ENCODE measurements at regions of chr2 and their contacts with region 1.

Region 1: GRCh38 chr2:11583840-11584524 is 50.1 kb downstream of the GREB1 start:
- DNase-seq: peak; percentile 98
- ATAC-seq: peak; percentile 97
- H3K4me3 ChIP-seq: no peak overlapping the region
- H3K27ac ChIP-seq: no peak overlapping the region
- H3K4me1 ChIP-seq: peaks cover 2% of the 10 kb centered on the region; the same call in 1 of the 2 replicates
- H3K27me3 ChIP-seq: peaks cover 36% of the 10 kb centered on the region
- CTCF ChIP-seq: peak; percentile 99
- POLR2A ChIP-seq: no peak
- RAD21 ChIP-seq: peak; percentile 99

Region 2: DNA sequence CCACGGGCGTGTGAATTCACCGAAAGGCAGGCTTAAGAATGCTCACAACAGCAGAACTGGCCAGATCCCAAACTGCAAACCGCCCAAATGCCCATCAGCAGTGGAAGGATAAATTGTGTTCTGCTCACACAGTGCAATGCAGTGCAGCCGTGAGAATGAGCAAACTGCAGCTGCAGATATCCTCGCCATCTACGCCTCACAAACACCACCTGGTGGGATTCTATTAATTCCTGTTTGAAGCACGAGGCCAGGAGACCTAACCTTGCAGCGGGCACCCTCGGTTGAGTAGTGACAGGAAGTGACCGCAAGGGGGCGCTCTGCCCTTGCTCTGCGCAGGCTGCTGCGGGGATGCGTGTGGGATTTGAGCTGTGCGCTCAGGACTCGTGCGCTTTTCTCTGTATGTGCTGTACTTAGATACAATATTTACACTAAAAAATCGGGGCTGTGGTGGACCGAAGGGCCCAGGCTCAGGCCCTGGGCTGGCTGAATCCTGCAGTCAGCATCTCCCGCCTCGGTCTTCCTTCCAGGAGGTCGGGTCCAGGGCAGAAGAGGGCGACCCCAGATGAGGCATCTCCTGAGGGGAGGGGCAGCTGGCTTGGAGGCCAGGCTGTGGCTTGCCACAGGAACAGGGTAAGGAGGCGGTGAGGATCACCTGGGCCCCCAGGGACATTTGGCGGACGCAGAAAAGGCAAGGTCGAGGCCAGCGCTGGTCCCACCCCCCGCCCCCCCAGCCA is 751.6 kb before region 1 on chr2:
- CTCF ChIA-PET with region 1: interaction called, 4 read pairs
- POLR2A ChIA-PET with region 1: no interaction called
- dilution Hi-C with region 1: no loop called
- in situ Hi-C with region 1: loop called (anchors 10 kb)
- intact Hi-C with region 1: loop called (anchors 2 kb)
- DNase-seq: peak; percentile 77
- ATAC-seq: peak; percentile 94
- H3K4me3 ChIP-seq: no peak overlapping the region
- H3K27ac ChIP-seq: no peak overlapping the region
- H3K4me1 ChIP-seq: no peaks in the 10 kb centered on the region
- H3K27me3 ChIP-seq: peaks cover 34% of the 10 kb centered on the region
- CTCF ChIP-seq: peak; percentile 97
- POLR2A ChIP-seq: no peak
- RAD21 ChIP-seq: peak; percentile 98

Region 3: GRCh38 chr2:11129598-11130449 is 454.2 kb before region 1 on chr2:
- CTCF ChIA-PET with region 1: interaction called, 12 read pairs
- POLR2A ChIA-PET with region 1: no interaction called
- dilution Hi-C with region 1: no loop called
- in situ Hi-C with region 1: no loop called
- intact Hi-C with region 1: loop called (anchors 1 kb)
- DNase-seq: no peak
- ATAC-seq: no peak
- H3K4me3 ChIP-seq: no peak overlapping the region
- H3K27ac ChIP-seq: no peak overlapping the region
- H3K4me1 ChIP-seq: peaks cover 14% of the 10 kb centered on the region
- H3K27me3 ChIP-seq: no peaks in the 10 kb centered on the region
- CTCF ChIP-seq: no peak
- POLR2A ChIP-seq: no peak
- RAD21 ChIP-seq: no peak

Region 4: GRCh38 chr2:11154923-11155380 is 429.0 kb before region 1 on chr2:
- CTCF ChIA-PET with region 1: no interaction called
- POLR2A ChIA-PET with region 1: no interaction called
- dilution Hi-C with region 1: no loop called
- in situ Hi-C with region 1: loop called (anchors 5 kb)
- intact Hi-C with region 1: no loop called
- DNase-seq: peak; percentile 93
- ATAC-seq: peak; percentile 90
- H3K4me3 ChIP-seq: peak overlapping the region; percentile 45
- H3K27ac ChIP-seq: peak overlapping the region; percentile 69
- H3K4me1 ChIP-seq: peaks cover 5% of the 10 kb centered on the region; the same call in 1 of the 2 replicates
- H3K27me3 ChIP-seq: peaks cover 2% of the 10 kb centered on the region; the same call in 1 of the 2 replicates
- CTCF ChIP-seq: no peak
- POLR2A ChIP-seq: peak; percentile 35; the same call in 1 of the 2 replicates
- RAD21 ChIP-seq: no peak

Region 5: DNA sequence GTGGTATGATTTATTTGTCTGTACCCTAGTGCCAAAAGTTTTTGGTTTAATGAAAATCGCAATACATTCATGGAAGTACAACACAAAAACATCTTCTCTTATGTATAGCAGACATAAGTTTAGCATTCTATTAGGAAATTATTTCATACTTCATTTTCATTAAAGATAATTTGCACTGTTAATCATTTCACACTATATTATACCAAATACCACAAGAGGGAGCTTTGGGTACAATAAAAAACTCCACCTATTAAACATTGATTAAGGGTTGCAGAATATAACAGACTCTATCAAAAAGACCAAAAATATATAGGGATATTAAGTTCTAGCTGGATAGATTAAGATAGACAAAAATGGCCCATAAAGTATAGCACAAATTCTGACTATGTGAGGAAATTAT is 349.7 kb before region 1 on chr2:
- CTCF ChIA-PET with region 1: no interaction called
- POLR2A ChIA-PET with region 1: no interaction called
- dilution Hi-C with region 1: no loop called
- in situ Hi-C with region 1: no loop called
- intact Hi-C with region 1: loop called (anchors 10 kb)
- DNase-seq: peak; percentile 28
- ATAC-seq: peak; percentile 62
- H3K4me3 ChIP-seq: no peak overlapping the region
- H3K27ac ChIP-seq: no peak overlapping the region
- H3K4me1 ChIP-seq: no peaks in the 10 kb centered on the region
- H3K27me3 ChIP-seq: no peaks in the 10 kb centered on the region
- CTCF ChIP-seq: peak; percentile 62
- POLR2A ChIP-seq: no peak
- RAD21 ChIP-seq: peak; percentile 71

Region 6: GRCh38 chr2:11477994-11478393 is 106.0 kb before region 1 on chr2:
- CTCF ChIA-PET with region 1: interaction called, 17 read pairs
- POLR2A ChIA-PET with region 1: interaction called, 9 read pairs
- dilution Hi-C with region 1: no loop called
- in situ Hi-C with region 1: loop called (anchors 5 kb)
- intact Hi-C with region 1: loop called (anchors 1 kb)
- DNase-seq: peak; percentile 85
- ATAC-seq: peak; percentile 80
- H3K4me3 ChIP-seq: no peak overlapping the region
- H3K27ac ChIP-seq: no peak overlapping the region
- H3K4me1 ChIP-seq: peaks cover under 1% of the 10 kb centered on the region; the same call in 1 of the 2 replicates
- H3K27me3 ChIP-seq: peaks cover 48% of the 10 kb centered on the region
- CTCF ChIP-seq: peak; percentile 76
- POLR2A ChIP-seq: no peak
- RAD21 ChIP-seq: peak; percentile 74

Region 7: GRCh38 chr2:11778923-11779757 is 195.2 kb after region 1 on chr2:
- CTCF ChIA-PET with region 1: interaction called, 3 read pairs
- POLR2A ChIA-PET with region 1: no interaction called
- dilution Hi-C with region 1: no loop called
- in situ Hi-C with region 1: no loop called
- intact Hi-C with region 1: loop called (anchors 2 kb)
- DNase-seq: peak; percentile 48
- ATAC-seq: peak; percentile 92
- H3K4me3 ChIP-seq: no peak overlapping the region
- H3K27ac ChIP-seq: no peak overlapping the region
- H3K4me1 ChIP-seq: peaks cover 5% of the 10 kb centered on the region
- H3K27me3 ChIP-seq: no peaks in the 10 kb centered on the region
- CTCF ChIP-seq: peak; percentile 97
- POLR2A ChIP-seq: no peak
- RAD21 ChIP-seq: peak; percentile 95